Activated CD4-positive, alpha-beta memory T cell treated with anti-CD3 and anti-CD28 coated beads, Interleukin-2, amount 10 ng/mL, durations not matched to agents 7 days and 5 days (primary cell): ENCODE measurements at regions of chr22 and their contacts with region 1.

Region 1: DNA sequence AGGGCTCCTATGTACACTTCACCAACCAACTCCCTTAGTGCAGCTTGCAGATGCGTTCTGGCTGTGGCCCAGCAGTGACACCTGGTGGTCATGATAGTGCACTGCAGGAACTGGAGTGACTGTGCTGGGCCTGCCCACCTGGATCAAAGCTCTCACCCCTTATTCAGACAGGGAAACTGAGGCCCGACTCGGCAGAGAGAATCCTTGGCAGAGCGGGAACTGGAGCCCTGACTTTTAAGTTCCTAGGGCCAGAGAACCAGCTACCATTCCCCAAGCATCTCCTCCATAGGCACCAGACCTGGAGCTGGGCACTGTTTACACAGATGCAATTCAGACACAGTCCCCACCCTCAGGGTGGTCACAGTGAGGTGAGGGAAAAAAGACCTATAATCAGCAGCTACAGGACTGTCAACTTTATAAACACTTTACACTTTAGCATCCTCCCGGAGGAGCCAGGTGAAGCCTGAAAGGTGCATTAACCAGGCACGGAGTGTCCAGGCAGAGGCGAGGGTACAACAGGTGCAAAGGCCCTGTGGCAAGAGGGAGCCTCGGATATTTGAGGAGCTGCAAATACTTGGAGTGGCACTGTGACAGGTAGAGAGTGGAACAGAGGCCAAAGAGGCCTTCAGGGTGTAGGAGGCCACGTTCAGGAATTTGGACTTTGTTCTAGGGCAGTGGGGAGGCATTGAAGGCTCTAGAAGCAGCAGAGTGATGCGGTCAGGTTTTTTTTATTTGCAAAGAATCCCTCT is 22.0 kb downstream of the RHBDD3 start:
- DNase-seq: peak; percentile 75
- H3K4me3 Mint-ChIP-seq: no peak overlapping the region
- H3K27ac Mint-ChIP-seq: no peak overlapping the region
- H3K4me1 Mint-ChIP-seq: peaks cover 1% of the 10 kb centered on the region
- H3K27me3 Mint-ChIP-seq: peaks cover 20% of the 10 kb centered on the region

Region 2: GRCh38 chr22:29202212-29203192 is 43.3 kb before region 1 on chr22:
- CTCF ChIA-PET with region 1: interaction called, 17 read pairs
- POLR2A ChIA-PET with region 1: interaction called, 5 read pairs
- DNase-seq: peak; percentile 78
- H3K4me3 Mint-ChIP-seq: peak overlapping the region; percentile 41
- H3K27ac Mint-ChIP-seq: peak overlapping the region; percentile 71
- H3K4me1 Mint-ChIP-seq: peaks cover 35% of the 10 kb centered on the region
- H3K27me3 Mint-ChIP-seq: peaks cover 50% of the 10 kb centered on the region

Region 3: GRCh38 chr22:29787371-29787980 is 541.7 kb after region 1 on chr22:
- CTCF ChIA-PET with region 1: no interaction called
- POLR2A ChIA-PET with region 1: no interaction called
- DNase-seq: no peak
- H3K4me3 Mint-ChIP-seq: no peak overlapping the region
- H3K27ac Mint-ChIP-seq: no peak overlapping the region
- H3K4me1 Mint-ChIP-seq: no peaks in the 10 kb centered on the region
- H3K27me3 Mint-ChIP-seq: no peaks in the 10 kb centered on the region